ENCODE measurements at regions of chr2 and their contacts with region 1.

Region 1: DNA sequence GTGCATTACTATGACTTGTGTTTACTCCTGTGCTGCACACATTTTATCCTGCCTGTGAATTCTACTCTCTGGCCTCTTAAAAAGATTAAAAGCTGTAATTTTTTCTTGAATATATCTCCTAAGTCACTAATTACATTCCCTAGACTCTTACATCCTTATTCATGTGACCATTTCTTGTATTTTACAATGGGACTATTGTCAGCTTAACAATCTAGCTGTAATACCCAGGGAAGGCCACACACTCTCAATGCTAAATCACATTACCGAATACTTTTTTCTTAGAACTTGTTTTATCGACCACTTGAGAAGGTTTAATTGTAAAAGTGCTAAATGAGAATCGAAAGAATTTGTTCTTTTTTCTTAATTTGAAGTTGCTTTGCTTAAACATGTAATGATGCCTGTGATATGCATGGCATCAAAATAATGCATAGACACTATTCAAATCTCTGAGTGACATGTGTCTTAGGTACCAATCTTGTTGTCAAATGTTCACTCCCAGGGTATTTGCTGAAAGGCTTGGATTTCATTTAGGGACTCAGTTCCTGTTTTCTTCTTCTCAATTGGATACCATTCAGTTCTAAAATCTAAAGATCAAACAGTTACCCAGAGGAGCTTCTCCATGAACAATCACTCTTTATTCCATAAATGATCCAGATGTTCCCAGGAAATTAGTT is 498.5 kb downstream of the DPP10 start:
- DNase-seq: no peak
- ATAC-seq: no peak
- H3K4me3 ChIP-seq: no peak overlapping the region
- H3K27ac ChIP-seq: no peak overlapping the region
- H3K4me1 ChIP-seq: no peaks in the 10 kb centered on the region
- H3K27me3 ChIP-seq: no peaks in the 10 kb centered on the region
- CTCF ChIP-seq: no peak

Region 2: GRCh38 chr2:114925296-114926255 is 15.3 kb before region 1 on chr2:
- CTCF ChIA-PET with region 1: no interaction called
- POLR2A ChIA-PET with region 1: interaction called, 13 read pairs
- in situ Hi-C with region 1: no loop called
- intact Hi-C with region 1: no loop called
- DNase-seq: no peak
- ATAC-seq: no peak
- H3K4me3 ChIP-seq: no peak overlapping the region
- H3K27ac ChIP-seq: no peak overlapping the region
- H3K4me1 ChIP-seq: no peaks in the 10 kb centered on the region
- H3K27me3 ChIP-seq: no peaks in the 10 kb centered on the region
- CTCF ChIP-seq: no peak